Sigmoid colon (tissue), 7 donors: ENCODE measurements at regions of chr5 and their contacts with region 1.

Region 1: GRCh38 chr5:66171349-66172344 is 27.5 kb downstream of the SREK1 start:
- DNase-seq: no peak
- H3K4me3 ChIP-seq: no peak overlapping the region
- H3K27ac ChIP-seq: no peak overlapping the region
- H3K4me1 ChIP-seq: peaks cover 0 to 12% (median 0%) of the 10 kb centered on the region in 4 donors
- H3K27me3 ChIP-seq: no peaks in the 10 kb centered on the region
- CTCF ChIP-seq: peak in 3 of 4 experiments; percentile 34 to 44 (median 43)
- EP300 ChIP-seq: no peak
- POLR2A ChIP-seq: no peak

Region 2: DNA sequence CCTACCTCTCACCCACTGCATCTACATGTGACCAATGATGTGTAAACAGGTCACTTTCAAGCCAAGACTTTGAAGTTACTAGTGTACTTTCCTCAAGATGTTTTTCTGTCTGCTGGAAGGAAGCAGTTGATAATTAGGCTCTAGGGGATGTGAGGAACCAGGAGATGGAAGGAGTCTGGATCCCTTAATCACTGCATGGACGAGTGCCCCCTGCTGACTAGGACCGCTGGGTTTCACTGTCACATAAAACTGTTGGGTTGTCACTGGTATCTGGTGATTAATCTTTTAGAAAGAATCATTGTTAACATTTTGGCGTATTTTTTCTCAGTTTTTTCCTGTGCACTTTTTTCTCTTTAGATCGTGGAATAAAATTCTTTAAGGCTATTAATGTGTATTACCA is 52.0 kb after region 1 on chr5:
- intact Hi-C with region 1: loop called (anchors 5 kb)
- DNase-seq: no peak
- H3K4me3 ChIP-seq: no peak overlapping the region
- H3K27ac ChIP-seq: no peak overlapping the region
- H3K4me1 ChIP-seq: no peaks in the 10 kb centered on the region
- H3K27me3 ChIP-seq: no peaks in the 10 kb centered on the region
- CTCF ChIP-seq: peak in 2 of 4 experiments; percentile 11 to 22
- EP300 ChIP-seq: no peak
- POLR2A ChIP-seq: no peak

Region 3: GRCh38 chr5:66306105-66306843 is 134.6 kb after region 1 on chr5:
- intact Hi-C with region 1: loop called (anchors 5 kb)
- DNase-seq: peak; percentile 72
- H3K4me3 ChIP-seq: no peak overlapping the region
- H3K27ac ChIP-seq: no peak overlapping the region
- H3K4me1 ChIP-seq: peaks cover 0 to 12% (median 0%) of the 10 kb centered on the region in 4 donors
- H3K27me3 ChIP-seq: no peaks in the 10 kb centered on the region
- CTCF ChIP-seq: peak in 3 of 4 experiments; percentile 65 to 73 (median 70)
- EP300 ChIP-seq: no peak
- POLR2A ChIP-seq: no peak

Region 4: DNA sequence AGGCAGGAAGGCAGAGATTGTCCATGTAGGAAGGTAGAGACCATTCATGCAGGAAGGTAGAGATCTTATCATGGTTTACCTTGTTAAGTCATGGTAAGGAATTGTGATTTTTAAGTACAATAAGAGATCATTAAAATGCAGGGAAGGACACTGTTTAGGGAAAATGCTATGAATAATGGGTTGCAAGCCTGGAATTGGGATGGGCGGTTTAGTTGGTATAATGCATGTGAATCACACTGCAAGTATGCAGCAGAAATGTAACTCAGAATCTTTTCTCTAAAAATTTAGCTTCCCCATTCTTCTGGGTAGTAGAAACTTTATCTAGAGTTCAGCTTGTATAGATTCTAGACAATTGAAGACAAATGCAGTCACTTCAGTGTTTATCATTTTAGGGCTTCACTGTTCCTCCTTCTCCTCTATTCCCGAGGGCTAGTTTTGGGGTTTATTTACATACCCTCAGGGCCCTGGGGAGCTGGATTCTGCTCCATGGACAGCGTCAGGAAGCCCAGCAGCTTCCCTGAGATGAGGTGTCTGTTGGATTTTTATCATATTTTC is 184.4 kb after region 1 on chr5:
- intact Hi-C with region 1: no loop called
- DNase-seq: no peak
- H3K4me3 ChIP-seq: no peak overlapping the region
- H3K27ac ChIP-seq: no peak overlapping the region
- H3K4me1 ChIP-seq: no peaks in the 10 kb centered on the region
- H3K27me3 ChIP-seq: no peaks in the 10 kb centered on the region
- CTCF ChIP-seq: no peak
- EP300 ChIP-seq: no peak
- POLR2A ChIP-seq: no peak

Region 5: DNA sequence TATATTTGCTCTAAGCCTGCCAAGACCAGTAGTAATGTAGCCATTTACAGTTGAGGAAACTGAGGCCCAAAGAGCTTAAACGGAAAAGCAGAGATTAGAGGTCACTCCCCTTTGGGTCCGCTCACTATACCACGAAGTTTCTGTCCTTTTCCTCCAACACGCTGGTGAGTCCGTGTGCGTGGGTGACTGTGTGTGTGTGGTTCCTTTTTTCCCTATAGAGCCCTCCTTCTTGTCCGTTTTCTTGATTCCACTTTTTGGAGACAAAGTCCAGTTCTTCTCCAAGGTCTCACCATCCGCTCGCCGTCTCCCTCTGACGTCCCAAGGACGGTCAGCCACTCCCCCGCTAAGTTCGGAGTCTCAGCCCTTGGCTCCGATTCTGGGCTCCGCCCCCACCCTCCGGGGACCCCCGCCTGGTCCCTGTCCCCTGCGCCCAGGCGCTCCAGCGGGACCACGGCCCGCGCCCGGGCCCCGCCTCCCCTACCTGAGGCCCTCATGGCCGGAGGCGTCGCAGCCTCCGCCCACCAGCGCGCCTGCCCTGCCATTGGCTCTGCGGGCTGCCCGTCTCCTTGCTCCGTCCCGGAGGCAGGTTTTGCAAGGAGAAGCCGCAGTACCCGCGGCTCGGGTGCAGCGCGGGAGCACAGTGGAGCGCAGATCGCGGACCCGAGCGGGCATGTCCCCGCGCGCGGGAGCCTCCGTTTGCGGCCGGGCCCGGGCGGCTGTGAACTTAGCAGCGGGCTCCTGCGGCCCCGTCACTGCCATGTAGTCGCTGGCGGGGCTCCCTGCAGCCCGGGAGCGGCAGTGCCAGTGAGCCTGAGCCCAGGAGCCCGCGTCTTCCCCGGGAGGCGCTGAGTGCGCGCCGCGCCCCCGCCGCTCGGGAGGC is 424.3 kb after region 1 on chr5 and contains the start of gene MAST4:
- intact Hi-C with region 1: loop called (anchors 5 kb)
- DNase-seq: peak; percentile 92
- H3K4me3 ChIP-seq: peak within 1 kb of the TSS; percentile 50 to 70 (median 58)
- H3K27ac ChIP-seq: peak within 1 kb of the TSS in 3 of 4 donors; percentile 29 to 59 (median 55)
- H3K4me1 ChIP-seq: peaks cover 2 to 23% (median 15%) of the 10 kb centered on the region in 4 donors
- H3K27me3 ChIP-seq: peaks cover 0 to 41% (median 12%) of the 10 kb centered on the region in 3 donors
- CTCF ChIP-seq: no peak
- EP300 ChIP-seq: no peak
- POLR2A ChIP-seq: no peak
- total RNA-seq, gene MAST4: 15.7 to 30.7 (median 24.0) TPM

Region 6: DNA sequence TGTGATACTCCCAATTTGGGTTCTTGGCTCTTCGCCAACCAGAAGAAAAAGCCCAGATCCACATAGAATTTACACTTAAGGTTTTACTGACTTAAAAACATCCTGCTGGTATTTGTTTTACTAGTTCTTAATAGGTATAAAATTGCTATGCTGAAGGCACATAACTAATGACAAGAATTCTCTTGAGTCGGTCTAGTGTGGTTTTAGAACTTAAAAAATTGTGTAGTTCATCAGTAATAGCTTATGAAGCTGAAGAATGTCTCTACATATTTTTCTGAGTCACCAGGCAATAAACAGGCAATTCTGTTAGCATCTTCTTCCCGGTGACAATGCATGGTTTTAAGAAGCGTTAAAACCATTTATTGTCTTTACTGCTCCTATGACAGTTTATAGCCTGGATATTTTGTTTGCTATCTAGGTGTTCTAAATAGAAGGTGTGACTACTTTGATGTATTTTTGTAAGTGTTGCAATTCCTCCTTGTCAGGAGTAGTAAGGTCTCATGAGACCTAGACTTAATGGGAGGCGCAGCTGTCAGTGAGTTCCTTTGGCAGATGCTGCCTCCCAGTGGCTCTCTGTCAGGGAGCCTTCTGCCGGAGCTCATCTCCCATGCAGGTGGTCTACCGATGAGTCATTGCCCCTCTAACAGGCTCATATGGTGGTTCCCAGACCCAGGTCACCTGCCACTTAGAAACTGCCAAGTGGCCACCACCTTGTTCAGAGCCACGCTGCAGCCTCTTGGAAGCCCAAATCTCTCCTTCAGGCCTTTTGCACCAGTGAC is 598.4 kb after region 1 on chr5:
- intact Hi-C with region 1: loop called (anchors 10 kb)
- DNase-seq: no peak
- H3K4me3 ChIP-seq: no peak overlapping the region
- H3K27ac ChIP-seq: no peak overlapping the region
- H3K4me1 ChIP-seq: peaks cover 0 to 17% (median 13%) of the 10 kb centered on the region in 4 donors
- H3K27me3 ChIP-seq: no peaks in the 10 kb centered on the region
- CTCF ChIP-seq: no peak
- EP300 ChIP-seq: no peak
- POLR2A ChIP-seq: no peak